A673 (cell line): ENCODE measurements at regions of chr19 and their contacts with region 1.

Region 1: DNA sequence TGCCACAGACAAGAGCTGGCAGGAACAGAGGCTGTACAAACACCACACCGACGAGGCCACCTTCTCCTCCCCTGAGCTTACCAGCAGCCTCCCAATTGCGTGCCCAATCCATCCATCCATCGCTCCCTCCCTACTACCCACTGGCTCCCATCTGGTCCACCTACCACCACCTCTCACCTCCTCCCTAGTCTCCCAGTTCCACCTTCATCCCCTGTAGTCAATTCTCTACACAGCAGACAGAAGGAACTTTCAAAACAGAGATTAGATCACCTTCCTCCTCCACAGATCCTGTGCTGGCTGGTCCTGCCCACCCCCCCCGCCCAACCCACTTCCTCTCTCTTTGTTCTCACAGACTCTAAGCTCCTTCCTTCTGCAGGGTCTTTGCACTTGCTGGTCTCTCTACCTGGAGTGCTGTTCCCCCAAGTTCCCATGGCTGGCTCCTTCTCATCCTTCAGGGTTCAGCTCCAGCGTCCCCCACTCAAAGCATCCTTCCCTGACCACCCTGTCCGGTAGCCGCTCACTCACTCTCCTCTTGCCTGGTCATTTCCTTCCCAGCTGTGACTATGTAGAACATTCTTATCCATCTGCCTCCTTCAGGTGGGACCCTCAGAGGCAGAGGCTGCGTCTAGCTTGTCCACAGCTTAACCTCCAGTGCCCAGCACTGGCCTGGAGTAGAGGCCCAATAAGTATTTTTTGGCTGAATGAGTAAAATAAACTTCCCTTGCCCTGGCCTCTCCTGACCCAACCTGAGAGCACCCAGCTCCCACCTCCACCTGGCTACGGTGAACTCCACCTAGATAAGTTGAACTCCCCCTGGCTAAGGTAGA is 23.0 kb downstream of the PIN1 start:
- DNase-seq: no peak
- H3K4me3 ChIP-seq: no peak overlapping the region
- H3K27ac ChIP-seq: no peak overlapping the region
- H3K4me1 ChIP-seq: no peaks in the 10 kb centered on the region
- H3K27me3 ChIP-seq: no peaks in the 10 kb centered on the region
- CTCF ChIP-seq: no peak

Region 2: DNA sequence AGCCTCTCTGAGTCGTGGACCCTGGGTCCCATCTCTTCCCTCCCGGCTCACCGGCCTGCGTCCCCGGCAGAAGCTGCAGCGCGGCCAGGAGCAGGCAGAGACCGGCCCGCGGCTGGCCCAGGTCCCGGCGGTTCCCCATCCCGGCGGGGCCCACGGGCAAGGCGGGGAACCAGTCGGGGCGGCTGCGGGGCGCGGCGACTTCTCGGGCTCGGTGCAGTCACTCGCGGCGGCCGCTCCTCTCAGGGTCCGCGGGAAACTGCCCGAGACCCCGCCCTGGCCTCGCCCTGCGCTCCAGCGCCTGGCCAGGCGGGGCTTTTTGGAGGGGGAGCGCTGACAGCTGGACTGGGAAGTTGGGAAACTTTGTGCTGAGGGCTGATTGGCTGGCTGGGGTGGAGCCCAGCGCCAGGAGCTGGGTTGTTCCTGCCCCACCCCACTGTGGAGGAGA is 152.1 kb after region 1 on chr19 and contains the start of gene COL5A3:
- CTCF ChIA-PET with region 1: no interaction called
- POLR2A ChIA-PET with region 1: no interaction called
- intact Hi-C with region 1: loop called (anchors 10 kb)
- DNase-seq: peak; percentile 41
- H3K4me3 ChIP-seq: peak within 1 kb of the TSS; percentile 39
- H3K27ac ChIP-seq: no peak within 1 kb of the TSS
- H3K4me1 ChIP-seq: peaks cover 55% of the 10 kb centered on the region
- H3K27me3 ChIP-seq: no peaks in the 10 kb centered on the region
- CTCF ChIP-seq: no peak
- total RNA-seq, gene COL5A3: 6.4 and 6.8 TPM in 2 replicates